ENCODE measurements at regions of chr4 and their contacts with region 1.

Region 1: GRCh38 chr4:82268050-82268825 is 105.6 kb downstream of the HNRNPD start:
- DNase-seq: peak; percentile 60
- H3K4me3 Mint-ChIP-seq: no peak overlapping the region
- H3K27ac Mint-ChIP-seq: no peak overlapping the region
- H3K4me1 Mint-ChIP-seq: peaks cover 13% of the 10 kb centered on the region
- H3K27me3 Mint-ChIP-seq: peaks cover 4% of the 10 kb centered on the region

Region 2: DNA sequence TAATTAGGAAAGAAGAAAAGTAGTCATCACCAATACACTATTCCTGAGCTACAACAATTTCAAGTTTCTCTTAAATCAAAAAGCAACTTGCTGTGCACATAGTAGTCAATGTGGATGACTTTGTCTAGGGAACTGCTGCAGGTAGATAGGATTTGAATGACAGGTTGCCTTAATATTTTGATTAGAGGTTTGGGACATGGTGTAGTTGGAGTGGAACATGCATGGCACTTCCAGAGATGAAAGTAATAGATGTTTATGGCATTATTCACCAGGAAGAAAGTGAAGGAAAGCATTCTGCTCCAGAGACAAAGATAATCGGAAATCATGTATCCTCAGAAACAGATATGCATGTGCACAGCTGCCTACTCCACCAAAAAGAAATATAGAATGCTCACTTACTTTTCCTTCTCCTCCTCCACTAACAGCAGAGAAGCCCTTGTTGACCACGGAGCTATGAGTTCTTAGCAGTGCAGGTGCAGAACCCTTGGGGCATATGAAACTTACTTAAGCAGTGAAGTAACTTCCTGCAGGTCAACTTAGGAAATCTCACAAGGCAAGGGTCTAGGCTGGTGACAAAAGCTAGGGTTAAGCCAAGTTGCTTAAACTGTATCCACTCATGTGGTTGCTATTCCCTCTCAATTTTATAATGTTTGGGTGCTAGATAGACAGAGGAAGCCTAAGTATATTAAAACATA is 285.2 kb before region 1 on chr4:
- CTCF ChIA-PET with region 1: no interaction called
- DNase-seq: no peak
- H3K4me3 Mint-ChIP-seq: no peak overlapping the region
- H3K27ac Mint-ChIP-seq: no peak overlapping the region
- H3K4me1 Mint-ChIP-seq: no peaks in the 10 kb centered on the region
- H3K27me3 Mint-ChIP-seq: no peaks in the 10 kb centered on the region

Region 3: DNA sequence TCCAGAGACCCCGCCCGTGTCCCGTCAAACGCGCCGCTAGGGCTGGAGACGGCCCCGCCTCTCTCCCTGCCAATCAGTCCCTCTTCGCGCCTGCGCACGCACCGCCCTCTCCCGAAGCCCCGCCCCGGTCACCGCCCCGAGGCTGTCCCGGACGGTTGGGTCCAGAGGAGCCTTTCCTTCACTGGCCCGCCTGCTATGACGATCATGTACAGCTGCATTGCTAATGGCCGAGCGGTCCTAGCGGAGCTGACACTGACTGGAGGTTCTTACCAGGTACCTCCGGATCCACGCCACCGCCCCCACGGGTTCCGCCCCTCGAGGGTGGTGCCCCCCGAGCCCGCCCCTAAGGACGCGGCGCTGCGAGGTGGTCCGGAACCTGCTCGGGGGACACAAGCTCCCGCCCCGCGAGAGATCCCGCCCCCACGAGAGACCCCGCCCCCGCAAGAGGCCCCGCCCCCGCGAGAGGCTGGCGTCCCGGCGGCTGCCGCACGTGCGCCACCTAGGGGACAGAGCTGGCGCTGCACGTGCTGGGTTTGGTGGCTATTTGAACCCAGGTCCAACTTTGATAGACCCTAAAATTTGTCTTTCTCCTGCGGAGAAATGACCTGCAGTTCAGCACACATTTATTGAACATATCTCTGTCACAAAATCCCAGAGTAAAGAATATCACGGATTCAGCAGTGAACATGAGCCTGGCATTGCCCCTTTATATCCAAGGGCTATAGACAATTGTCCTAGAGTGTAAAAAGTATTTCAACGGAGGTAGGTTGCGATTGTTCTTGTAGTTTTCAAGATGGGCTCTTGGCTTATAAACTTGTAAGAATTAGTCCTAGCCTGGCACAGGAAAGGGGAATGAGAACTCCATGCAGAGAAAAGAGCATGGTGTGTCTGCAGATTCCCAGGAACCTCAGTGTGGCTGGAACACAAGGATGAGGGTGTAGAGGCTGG is 16.9 kb after region 1 on chr4:
- CTCF ChIA-PET with region 1: interaction called, 15 read pairs
- DNase-seq: peak; percentile 99
- H3K4me3 Mint-ChIP-seq: peak overlapping the region; percentile 70
- H3K27ac Mint-ChIP-seq: peak overlapping the region; percentile 81
- H3K4me1 Mint-ChIP-seq: peaks cover 15% of the 10 kb centered on the region
- H3K27me3 Mint-ChIP-seq: peaks cover 41% of the 10 kb centered on the region

Region 4: GRCh38 chr4:82491251-82491960 is 223.2 kb after region 1 on chr4:
- CTCF ChIA-PET with region 1: no interaction called
- DNase-seq: no peak
- H3K4me3 Mint-ChIP-seq: no peak overlapping the region
- H3K27ac Mint-ChIP-seq: no peak overlapping the region
- H3K4me1 Mint-ChIP-seq: no peaks in the 10 kb centered on the region
- H3K27me3 Mint-ChIP-seq: no peaks in the 10 kb centered on the region

Measured in activated naive CD4-positive, alpha-beta T cell treated with anti-CD3 and anti-CD28 coated beads, Interleukin-2, amount 10 ng/mL, durations not matched to agents 7 days and 5 days (primary cell).